Kidney (tissue), 22 donors: ENCODE measurements at regions of chr2 and their contacts with region 1.

Region 1: DNA sequence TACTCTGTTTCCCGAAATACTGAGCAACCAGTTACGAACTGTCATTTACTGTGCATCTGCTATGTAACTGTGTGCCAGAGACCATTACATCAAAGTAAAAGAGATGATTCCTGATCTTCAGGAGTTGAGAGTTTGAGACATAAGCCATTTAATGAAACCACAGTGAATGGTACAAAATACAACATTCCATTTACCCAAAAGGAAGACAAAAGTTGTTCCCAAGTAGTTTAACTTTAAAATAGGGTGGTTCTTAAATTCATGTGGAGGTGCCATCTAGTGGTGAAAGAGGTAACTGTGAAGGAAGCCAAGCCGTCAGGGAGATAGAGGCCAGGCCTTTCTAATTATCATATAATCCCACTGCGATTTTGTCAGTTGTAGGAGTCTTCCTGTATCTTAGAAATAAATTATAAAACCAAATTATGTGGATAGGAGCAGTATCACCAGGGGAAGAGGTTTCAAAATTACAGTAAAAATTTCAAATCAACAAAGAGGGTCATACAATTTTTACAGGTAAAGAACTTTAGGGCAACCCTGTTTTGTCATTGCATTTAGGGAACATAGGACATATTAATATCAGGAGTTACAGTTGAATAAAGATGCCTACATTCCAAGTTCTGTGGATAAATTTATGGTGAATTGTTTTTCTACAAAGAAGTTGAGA is 67.7 kb downstream of the EPAS1 start:
- DNase-seq: peak in 2 of 5 donors; percentile 53 to 66
- H3K4me3 ChIP-seq: no peak overlapping the region
- H3K27ac ChIP-seq: no peak overlapping the region
- H3K4me1 ChIP-seq: peaks cover 0 to 3% (median 2%) of the 10 kb centered on the region in 3 donors
- H3K27me3 ChIP-seq: no peaks in the 10 kb centered on the region
- CTCF ChIP-seq: peak; percentile 80

Region 2: DNA sequence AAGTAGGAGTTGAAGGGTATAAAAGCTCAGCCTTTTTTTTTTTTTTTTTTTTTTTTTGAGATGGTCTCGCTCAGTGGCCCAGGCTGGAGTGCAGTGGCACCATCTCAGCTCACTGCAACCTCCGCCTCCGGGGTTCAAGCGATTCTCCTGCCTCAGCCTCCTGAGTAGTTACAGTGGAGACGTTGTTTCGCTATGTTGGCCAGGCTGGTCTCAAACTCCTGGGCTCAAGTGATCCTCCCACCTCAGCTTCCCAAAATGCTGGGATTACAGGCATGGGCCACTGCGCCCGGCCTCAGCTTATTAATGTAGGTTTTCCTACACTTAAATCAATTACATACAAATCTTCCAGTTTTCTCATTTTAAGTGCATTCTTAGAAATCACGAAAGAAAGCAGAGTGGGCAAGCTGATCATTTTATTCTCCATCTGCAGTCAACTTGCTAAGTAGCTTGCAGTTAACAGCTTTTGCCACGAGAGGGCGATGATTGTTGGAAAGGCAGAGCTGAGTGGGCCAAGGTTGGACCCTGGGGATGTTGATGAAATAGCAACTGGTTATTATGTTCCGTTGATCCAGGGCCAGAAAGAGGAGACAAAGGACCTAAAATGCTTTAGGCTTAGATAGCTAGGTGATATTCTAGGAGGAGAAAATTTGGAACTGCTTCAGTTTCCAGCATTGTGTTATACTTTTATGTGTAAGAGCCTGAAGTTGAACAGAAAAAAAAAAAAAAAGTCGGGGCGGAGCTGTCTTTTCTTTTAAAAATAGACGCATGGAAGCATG is 302.1 kb before region 1 on chr2:
- intact Hi-C with region 1: loop called (anchors 10 kb)
- DNase-seq: peak in 4 of 5 donors; percentile 81 to 94 (median 84)
- H3K4me3 ChIP-seq: no peak overlapping the region
- H3K27ac ChIP-seq: peak overlapping the region; percentile 23 to 65
- H3K4me1 ChIP-seq: peaks cover 0 to 12% (median 7%) of the 10 kb centered on the region in 3 donors
- H3K27me3 ChIP-seq: no peaks in the 10 kb centered on the region
- CTCF ChIP-seq: peak; percentile 88